Activated CD4-positive, alpha-beta memory T cell treated with anti-CD3 and anti-CD28 coated beads for 36 hours (primary cell): ENCODE measurements at regions of chr20 and their contacts with region 1.

Region 1: GRCh38 chr20:63537525-63538203 is 488 bp upstream of the PTK6 start:
- DNase-seq: peak; percentile 99
- H3K4me3 Mint-ChIP-seq: peak overlapping the region; percentile 66
- H3K27ac Mint-ChIP-seq: peak overlapping the region; percentile 80
- H3K4me1 Mint-ChIP-seq: peaks cover 15% of the 10 kb centered on the region
- H3K27me3 Mint-ChIP-seq: no peaks in the 10 kb centered on the region

Region 2: DNA sequence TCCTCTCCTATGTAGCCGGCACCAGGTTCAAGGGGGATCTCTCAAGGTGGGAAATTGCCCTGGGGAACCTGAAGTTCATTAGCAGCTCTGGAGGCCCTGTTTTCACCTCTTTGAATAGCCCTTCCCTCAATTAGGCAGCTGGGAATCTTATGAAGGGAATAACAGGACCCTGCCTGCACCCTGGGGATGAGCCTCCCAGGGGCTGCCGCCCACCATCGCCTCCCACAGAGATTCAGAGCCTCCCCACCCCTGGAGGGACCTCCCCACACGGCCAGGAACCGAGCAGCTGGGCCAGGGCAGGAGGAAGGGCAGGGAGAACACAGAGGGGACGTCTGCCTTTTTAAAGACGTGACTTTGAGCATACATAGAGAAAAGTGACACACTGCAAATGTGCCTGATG is 34.1 kb before region 1 on chr20:
- CTCF ChIA-PET with region 1: no interaction called
- POLR2A ChIA-PET with region 1: no interaction called
- intact Hi-C with region 1: no loop called
- DNase-seq: no peak
- H3K4me3 Mint-ChIP-seq: no peak overlapping the region
- H3K27ac Mint-ChIP-seq: no peak overlapping the region
- H3K4me1 Mint-ChIP-seq: peaks cover 4% of the 10 kb centered on the region
- H3K27me3 Mint-ChIP-seq: peaks cover 31% of the 10 kb centered on the region

Region 3: DNA sequence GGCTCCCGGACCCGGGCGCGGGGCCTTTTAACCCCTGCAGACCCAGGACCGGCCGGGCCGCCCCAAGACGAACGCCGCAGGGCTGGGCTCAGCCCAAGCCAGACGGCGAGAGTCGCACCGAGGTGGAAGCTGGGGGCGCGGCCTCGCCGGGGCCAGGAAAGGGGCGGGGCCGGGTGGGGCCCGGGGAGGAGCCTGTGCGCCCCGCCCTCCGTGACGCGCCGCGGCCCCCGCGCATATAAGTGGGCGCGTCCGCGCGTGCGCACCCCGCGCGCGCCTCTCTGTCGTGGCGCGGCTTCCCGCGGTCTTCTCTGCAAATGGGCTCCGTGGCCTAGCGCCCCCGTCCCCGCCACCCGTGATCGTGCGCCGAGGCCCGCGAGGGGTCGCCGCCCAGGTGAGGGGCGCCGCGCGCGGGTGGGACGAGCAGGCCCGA is 17.1 kb before region 1 on chr20 and contains the start of gene PPDPF:
- CTCF ChIA-PET with region 1: interaction called, 15 read pairs
- POLR2A ChIA-PET with region 1: interaction called, 55 read pairs
- intact Hi-C with region 1: no loop called
- DNase-seq: peak; percentile 87
- H3K4me3 Mint-ChIP-seq: peak within 1 kb of the TSS; percentile 78
- H3K27ac Mint-ChIP-seq: peak within 1 kb of the TSS; percentile 79
- H3K4me1 Mint-ChIP-seq: peaks cover 23% of the 10 kb centered on the region
- H3K27me3 Mint-ChIP-seq: no peaks in the 10 kb centered on the region
- total RNA-seq, gene PPDPF: 191 to 201 TPM

Region 4: DNA sequence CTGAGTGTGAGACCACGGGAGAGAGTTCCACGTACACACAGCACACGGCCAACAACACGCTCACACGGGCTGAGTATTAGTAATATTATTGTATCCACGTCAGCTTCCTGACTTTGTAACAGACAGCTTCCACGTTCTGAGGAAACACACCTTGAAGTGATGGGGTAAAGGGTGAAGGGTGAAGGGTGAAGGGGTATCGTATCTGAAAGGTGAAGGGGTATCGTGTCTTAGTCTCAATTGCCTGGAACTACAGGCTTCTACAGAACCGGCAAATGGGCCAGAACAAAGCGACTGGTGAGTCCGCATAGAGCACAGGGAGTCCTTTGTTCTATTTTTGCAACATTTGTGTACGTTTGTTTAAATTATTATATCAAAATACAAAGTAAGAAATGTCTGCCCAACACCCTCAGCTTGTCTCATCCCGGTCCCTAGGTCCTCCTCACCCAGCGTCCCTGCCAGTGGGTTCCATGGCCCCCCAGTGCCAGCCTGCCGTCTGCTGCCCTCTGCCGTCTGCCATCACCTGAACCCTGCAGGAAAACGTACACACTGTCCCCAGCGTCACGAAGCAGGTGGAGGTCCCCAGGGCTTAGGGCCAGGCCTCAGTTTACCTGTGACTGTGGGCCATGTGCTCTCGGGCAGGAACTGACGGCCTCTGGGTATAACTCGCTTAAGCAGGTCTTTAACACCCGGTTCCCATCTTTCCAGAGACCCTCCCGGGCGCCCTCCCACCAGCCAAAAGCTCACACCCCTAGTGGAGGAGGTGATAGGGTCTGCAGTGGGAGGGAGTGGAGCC is 40.8 kb after region 1 on chr20:
- CTCF ChIA-PET with region 1: interaction called, 5 read pairs
- POLR2A ChIA-PET with region 1: interaction called, 3 read pairs
- intact Hi-C with region 1: loop called (anchors 2 kb)
- DNase-seq: no peak
- H3K4me3 Mint-ChIP-seq: no peak overlapping the region
- H3K27ac Mint-ChIP-seq: no peak overlapping the region
- H3K4me1 Mint-ChIP-seq: no peaks in the 10 kb centered on the region
- H3K27me3 Mint-ChIP-seq: peaks cover 2% of the 10 kb centered on the region

Region 5: GRCh38 chr20:63698739-63699465 is 161.2 kb after region 1 on chr20:
- CTCF ChIA-PET with region 1: no interaction called
- POLR2A ChIA-PET with region 1: interaction called, 3 read pairs
- intact Hi-C with region 1: loop called (anchors 5 kb)
- DNase-seq: peak; percentile 88
- H3K4me3 Mint-ChIP-seq: peak overlapping the region; percentile 39
- H3K27ac Mint-ChIP-seq: peak overlapping the region; percentile 92
- H3K4me1 Mint-ChIP-seq: peaks cover 41% of the 10 kb centered on the region
- H3K27me3 Mint-ChIP-seq: no peaks in the 10 kb centered on the region

Region 6: GRCh38 chr20:63791497-63792156 is 254.0 kb after region 1 on chr20:
- CTCF ChIA-PET with region 1: interaction called, 10 read pairs
- POLR2A ChIA-PET with region 1: no interaction called
- intact Hi-C with region 1: loop called (anchors 5 kb)
- DNase-seq: no peak
- H3K4me3 Mint-ChIP-seq: no peak overlapping the region
- H3K27ac Mint-ChIP-seq: no peak overlapping the region
- H3K4me1 Mint-ChIP-seq: peaks cover 3% of the 10 kb centered on the region
- H3K27me3 Mint-ChIP-seq: peaks cover 10% of the 10 kb centered on the region

Region 7: DNA sequence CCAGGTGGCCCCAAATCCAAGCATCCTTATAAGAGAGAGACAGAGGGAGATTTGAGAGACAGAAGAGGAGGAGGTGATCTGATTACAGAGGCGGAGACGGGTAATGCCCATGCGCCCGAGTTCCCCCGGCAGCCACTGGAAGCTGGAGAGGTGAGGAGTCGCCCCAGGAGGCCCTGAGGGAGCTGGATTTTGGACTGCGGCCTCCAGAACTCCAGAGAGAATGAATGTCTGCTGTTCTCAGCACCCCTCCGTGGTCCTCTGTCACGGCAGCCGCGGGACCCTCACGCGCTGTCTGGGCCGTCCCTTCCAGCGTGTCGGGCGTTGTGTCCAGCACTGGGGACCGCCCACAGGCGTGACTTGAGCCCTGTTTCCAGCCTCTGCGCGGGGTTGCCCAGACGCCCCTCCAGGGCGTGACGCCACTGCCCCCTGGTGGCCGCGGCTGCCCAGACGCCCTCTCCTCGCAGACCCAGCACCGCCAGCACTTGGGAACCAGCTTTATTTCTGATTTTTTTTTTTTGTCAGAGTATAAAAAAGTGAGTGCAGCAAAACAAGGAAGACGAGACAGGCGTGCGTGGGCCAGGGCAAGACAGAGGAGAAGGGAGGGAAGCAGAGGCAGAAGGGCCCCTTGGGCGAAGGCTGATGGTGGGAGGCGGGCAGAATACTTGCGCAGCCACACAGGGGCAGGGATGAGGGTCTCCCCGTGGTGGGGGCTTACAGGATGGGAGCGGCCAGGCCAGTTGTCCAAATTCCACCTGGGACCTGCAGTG is 436.2 kb after region 1 on chr20:
- CTCF ChIA-PET with region 1: interaction called, 18 read pairs
- POLR2A ChIA-PET with region 1: no interaction called
- intact Hi-C with region 1: no loop called
- DNase-seq: peak; percentile 83
- H3K4me3 Mint-ChIP-seq: no peak overlapping the region
- H3K27ac Mint-ChIP-seq: peak overlapping the region; percentile 31
- H3K4me1 Mint-ChIP-seq: peaks cover 37% of the 10 kb centered on the region
- H3K27me3 Mint-ChIP-seq: no peaks in the 10 kb centered on the region

Region 8: GRCh38 chr20:64062596-64063388 is 525.1 kb after region 1 on chr20 and contains the start of gene TCEA2:
- CTCF ChIA-PET with region 1: interaction called, 4 read pairs
- POLR2A ChIA-PET with region 1: no interaction called
- intact Hi-C with region 1: loop called (anchors 10 kb)
- DNase-seq: peak; percentile 97
- H3K4me3 Mint-ChIP-seq: peak within 1 kb of the TSS; percentile 85
- H3K27ac Mint-ChIP-seq: peak within 1 kb of the TSS; percentile 69
- H3K4me1 Mint-ChIP-seq: peaks cover 44% of the 10 kb centered on the region
- H3K27me3 Mint-ChIP-seq: no peaks in the 10 kb centered on the region
- total RNA-seq, gene TCEA2: 27.3 to 29.9 TPM